Activated CD4-positive, alpha-beta T cell treated with anti-CD3 and anti-CD28 coated beads for 36 hours (primary cell): ENCODE measurements at regions of chr1 and their contacts with region 1.

Region 1: DNA sequence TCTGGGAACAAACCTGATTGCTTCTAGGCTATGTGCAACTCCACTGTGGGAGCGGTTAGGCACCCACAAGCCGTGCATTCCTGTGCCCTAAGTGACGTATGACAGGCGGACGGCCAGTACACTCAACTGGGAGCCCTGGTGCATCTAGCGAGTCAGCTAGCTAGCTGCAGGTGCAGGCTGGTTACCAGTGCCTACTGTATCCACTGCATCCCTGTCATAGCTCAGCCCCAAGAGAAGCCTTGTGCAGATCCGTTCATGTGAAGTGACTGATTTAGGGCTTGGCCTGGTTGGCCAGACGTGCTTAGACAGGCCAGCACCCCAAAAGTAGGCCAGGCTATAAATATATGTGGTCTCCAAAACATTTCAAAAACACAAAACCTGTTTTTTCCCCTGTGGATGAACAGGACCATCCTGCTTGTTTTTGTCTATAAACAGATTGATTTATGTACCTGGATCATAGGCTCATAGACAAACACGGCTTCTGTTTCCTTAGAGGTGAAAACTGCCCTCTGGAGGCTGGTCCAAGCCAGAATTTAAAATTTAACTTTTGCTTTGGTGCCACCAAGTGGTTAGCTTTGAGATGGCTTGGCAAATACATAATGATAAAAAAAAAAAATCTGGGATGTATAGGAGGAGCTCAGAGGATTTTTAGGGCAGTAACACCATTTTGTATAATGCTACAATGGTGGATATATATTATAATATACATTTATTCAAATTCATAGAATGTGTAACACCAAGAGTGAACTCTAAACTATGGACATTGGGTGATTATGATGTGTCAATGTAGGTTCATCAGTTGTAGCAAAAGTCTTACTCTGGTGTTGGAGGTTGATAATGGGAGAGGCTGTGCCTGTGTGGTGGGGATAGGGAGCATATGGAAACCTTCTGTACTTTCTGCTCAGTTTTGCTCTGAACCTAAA is 68.5 kb downstream of the GIPC2 start:
- DNase-seq: peak; percentile 72
- ATAC-seq: peak; percentile 93
- H3K4me3 Mint-ChIP-seq: no peak overlapping the region
- H3K27ac Mint-ChIP-seq: no peak overlapping the region
- H3K4me1 Mint-ChIP-seq: peaks cover 5% of the 10 kb centered on the region
- H3K27me3 Mint-ChIP-seq: no peaks in the 10 kb centered on the region

Region 2: GRCh38 chr1:76901158-76901767 is 1213.0 kb before region 1 on chr1:
- CTCF ChIA-PET with region 1: no interaction called
- POLR2A ChIA-PET with region 1: no interaction called
- intact Hi-C with region 1: loop called in 1 of 2 experiments (anchors 5 kb)
- DNase-seq: peak; percentile 53
- ATAC-seq: peak; percentile 86
- H3K4me3 Mint-ChIP-seq: no peak overlapping the region
- H3K27ac Mint-ChIP-seq: no peak overlapping the region
- H3K4me1 Mint-ChIP-seq: no peaks in the 10 kb centered on the region
- H3K27me3 Mint-ChIP-seq: no peaks in the 10 kb centered on the region

Region 3: GRCh38 chr1:77347646-77348045 is 766.6 kb before region 1 on chr1:
- CTCF ChIA-PET with region 1: no interaction called
- POLR2A ChIA-PET with region 1: no interaction called
- intact Hi-C with region 1: no loop called
- DNase-seq: peak; percentile 60
- ATAC-seq: peak; percentile 94
- H3K4me3 Mint-ChIP-seq: no peak overlapping the region
- H3K27ac Mint-ChIP-seq: peak overlapping the region; percentile 27
- H3K4me1 Mint-ChIP-seq: peaks cover 23% of the 10 kb centered on the region
- H3K27me3 Mint-ChIP-seq: no peaks in the 10 kb centered on the region

Region 4: DNA sequence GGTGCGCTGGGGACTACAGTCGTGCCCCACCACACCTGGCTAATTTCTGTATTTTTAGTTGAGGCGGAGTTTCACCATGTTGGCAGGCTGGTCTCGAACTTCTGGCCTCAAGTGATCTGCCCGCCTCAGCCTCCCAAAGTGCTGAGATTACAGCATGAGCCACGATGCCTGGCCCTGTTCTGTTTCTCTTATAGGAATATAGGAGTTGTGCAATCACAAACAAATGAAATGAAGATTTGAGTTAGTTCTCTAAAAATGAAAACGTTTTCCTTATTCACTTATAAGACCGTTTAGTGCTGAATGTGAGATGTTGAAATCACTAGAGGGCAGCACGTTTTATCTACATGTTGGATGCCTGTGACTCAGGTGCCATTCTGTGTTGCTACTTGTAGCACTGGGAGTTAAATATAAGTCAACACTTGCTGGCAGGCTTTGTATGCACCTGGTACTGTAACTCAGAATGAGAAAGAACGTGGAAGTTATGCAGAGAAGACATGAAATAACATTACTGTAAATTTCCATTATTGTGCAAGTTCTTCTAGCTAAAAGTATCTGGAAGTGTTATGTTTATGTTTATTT is 289.1 kb before region 1 on chr1:
- CTCF ChIA-PET with region 1: no interaction called
- POLR2A ChIA-PET with region 1: no interaction called
- intact Hi-C with region 1: loop called (anchors 1 to 2 kb)
- DNase-seq: peak; percentile 32
- ATAC-seq: peak; percentile 80
- H3K4me3 Mint-ChIP-seq: no peak overlapping the region
- H3K27ac Mint-ChIP-seq: no peak overlapping the region
- H3K4me1 Mint-ChIP-seq: no peaks in the 10 kb centered on the region
- H3K27me3 Mint-ChIP-seq: no peaks in the 10 kb centered on the region

Region 5: DNA sequence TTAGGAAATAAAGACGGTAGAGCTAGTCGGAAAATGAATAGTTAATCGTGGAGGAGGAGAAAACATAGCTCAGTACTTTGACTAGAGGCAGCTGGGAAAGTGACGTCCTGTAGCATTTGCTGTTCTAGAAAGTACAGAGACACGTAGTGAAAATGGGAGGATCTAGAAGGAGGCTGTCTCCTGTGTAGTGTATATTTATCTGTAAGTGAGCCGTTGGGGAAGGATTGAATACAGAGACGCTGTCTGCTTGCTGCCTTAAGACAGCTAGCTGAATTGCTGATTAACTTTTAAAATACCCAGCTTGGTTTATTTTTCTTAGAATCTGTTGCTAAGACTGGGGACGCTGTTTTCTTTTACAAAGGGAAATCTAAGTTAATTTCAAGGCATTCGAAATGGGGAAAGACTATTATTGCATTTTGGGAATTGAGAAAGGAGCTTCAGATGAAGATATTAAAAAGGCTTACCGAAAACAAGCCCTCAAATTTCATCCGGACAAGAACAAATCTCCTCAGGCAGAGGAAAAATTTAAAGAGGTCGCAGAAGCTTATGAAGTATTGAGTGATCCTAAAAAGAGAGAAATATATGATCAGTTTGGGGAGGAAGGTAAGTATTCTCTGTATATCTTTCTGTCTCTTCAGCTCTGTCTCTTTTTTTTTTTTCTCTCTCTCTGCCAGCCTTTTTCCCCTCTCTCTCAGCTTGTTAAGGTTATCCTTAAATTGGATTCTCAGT is 109.4 kb before region 1 on chr1 and contains the start of gene DNAJB4:
- CTCF ChIA-PET with region 1: interaction called, 17 read pairs
- POLR2A ChIA-PET with region 1: interaction called, 30 read pairs
- intact Hi-C with region 1: loop called (anchors 1 to 2 kb)
- DNase-seq: peak; percentile 75
- ATAC-seq: peak; percentile 99
- H3K4me3 Mint-ChIP-seq: peak within 1 kb of the TSS; percentile 91
- H3K27ac Mint-ChIP-seq: peak within 1 kb of the TSS; percentile 99
- H3K4me1 Mint-ChIP-seq: peaks cover 41% of the 10 kb centered on the region
- H3K27me3 Mint-ChIP-seq: no peaks in the 10 kb centered on the region
- total RNA-seq, gene DNAJB4: 8.8 to 9.8 TPM

Region 6: GRCh38 chr1:78132174-78132947 is 18.1 kb after region 1 on chr1:
- CTCF ChIA-PET with region 1: interaction called, 20 read pairs
- POLR2A ChIA-PET with region 1: no interaction called
- intact Hi-C with region 1: no loop called
- DNase-seq: no peak
- ATAC-seq: no peak
- H3K4me3 Mint-ChIP-seq: no peak overlapping the region
- H3K27ac Mint-ChIP-seq: no peak overlapping the region
- H3K4me1 Mint-ChIP-seq: no peaks in the 10 kb centered on the region
- H3K27me3 Mint-ChIP-seq: no peaks in the 10 kb centered on the region